Posterior vena cava (tissue), 2 donors: ENCODE measurements at regions of chr1 and their contacts with region 1.

Region 1: GRCh38 chr1:150813058-150813707 is 5.1 kb upstream of the CTSK start:
- DNase-seq: peak; percentile 89

Region 2: GRCh38 chr1:150561974-150562445 is 251.2 kb before region 1 on chr1:
- intact Hi-C with region 1: loop called in 1 of 2 experiments (anchors 10 kb)
- DNase-seq: peak; percentile 98